Panc1 (cell line): ENCODE measurements at regions of chr17 and their contacts with region 1.

Region 1: GRCh38 chr17:66589892-66590291 is 245.0 kb upstream of the CACNG5 start:
- DNase-seq: no peak
- ATAC-seq: no peak
- H3K4me3 ChIP-seq: no peak overlapping the region
- H3K27ac ChIP-seq: no peak overlapping the region
- H3K4me1 ChIP-seq: no peaks in the 10 kb centered on the region
- H3K27me3 ChIP-seq: no peaks in the 10 kb centered on the region
- CTCF ChIP-seq: no peak

Region 2: DNA sequence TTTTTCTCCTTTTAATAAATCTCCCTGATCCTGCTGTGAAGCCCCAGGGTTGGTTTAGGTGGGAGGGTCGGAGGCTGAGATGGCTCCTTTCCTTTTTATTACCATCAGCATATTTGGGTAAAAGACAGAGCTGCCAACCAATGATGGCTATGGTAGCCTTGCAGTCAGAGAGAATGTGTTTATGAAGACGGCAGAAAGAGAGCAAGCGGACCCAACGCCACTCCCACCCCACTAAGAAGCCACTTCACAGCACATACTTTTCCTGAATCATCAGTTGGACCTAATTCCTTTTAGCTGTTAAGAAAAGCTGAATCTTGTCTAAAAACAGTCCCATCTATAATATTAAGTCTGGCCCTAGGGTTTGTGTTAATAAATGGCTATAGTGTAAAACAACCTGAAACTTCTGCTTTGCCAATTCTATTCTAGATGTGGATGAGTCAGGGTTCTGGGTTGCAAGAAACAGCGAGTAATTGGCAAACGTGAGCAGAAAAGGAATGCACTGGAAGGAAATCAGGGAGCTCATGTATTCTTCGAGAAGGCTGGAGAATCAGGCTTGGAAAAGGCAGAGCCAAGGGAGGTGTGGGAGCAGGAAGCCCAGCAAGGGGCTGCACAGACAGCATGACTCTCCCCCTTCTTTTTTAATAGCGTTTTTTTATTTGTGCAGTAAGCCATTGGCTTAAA is 321.5 kb before region 1 on chr17:
- CTCF ChIA-PET with region 1: no interaction called
- POLR2A ChIA-PET with region 1: no interaction called
- in situ Hi-C with region 1: no loop called
- intact Hi-C with region 1: no loop called
- DNase-seq: no peak
- ATAC-seq: no peak
- H3K4me3 ChIP-seq: no peak overlapping the region
- H3K27ac ChIP-seq: no peak overlapping the region
- H3K4me1 ChIP-seq: peaks cover 12% of the 10 kb centered on the region
- H3K27me3 ChIP-seq: no peaks in the 10 kb centered on the region
- CTCF ChIP-seq: no peak

Region 3: DNA sequence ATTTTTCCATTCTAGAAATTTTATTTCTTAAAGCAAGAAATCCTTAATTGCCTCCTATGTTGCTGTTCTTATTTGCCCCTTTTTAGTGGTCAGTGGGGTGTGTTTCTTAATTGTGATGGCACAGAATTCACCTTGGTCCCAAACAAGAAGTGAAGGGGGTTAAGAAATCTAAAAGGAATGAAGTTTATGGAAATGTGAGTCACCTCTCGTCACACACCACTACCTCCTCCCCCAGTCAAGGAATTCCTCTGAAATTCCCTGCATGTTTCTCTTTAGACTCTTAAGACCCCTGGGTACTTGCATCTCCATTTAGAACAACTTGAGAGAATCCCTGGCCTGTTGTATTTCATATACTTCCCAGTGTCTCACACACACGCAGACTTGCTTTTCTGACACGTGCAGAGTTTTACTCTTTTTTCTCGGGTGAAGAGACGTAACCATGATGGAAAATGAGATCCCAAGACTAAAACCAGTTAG is 40.1 kb before region 1 on chr17:
- CTCF ChIA-PET with region 1: no interaction called
- POLR2A ChIA-PET with region 1: interaction called, 16 read pairs
- in situ Hi-C with region 1: no loop called
- intact Hi-C with region 1: no loop called
- DNase-seq: no peak
- ATAC-seq: peak; percentile 79
- H3K4me3 ChIP-seq: no peak overlapping the region
- H3K27ac ChIP-seq: peak overlapping the region; percentile 75
- H3K4me1 ChIP-seq: peaks cover 40% of the 10 kb centered on the region
- H3K27me3 ChIP-seq: no peaks in the 10 kb centered on the region
- CTCF ChIP-seq: no peak

Region 4: DNA sequence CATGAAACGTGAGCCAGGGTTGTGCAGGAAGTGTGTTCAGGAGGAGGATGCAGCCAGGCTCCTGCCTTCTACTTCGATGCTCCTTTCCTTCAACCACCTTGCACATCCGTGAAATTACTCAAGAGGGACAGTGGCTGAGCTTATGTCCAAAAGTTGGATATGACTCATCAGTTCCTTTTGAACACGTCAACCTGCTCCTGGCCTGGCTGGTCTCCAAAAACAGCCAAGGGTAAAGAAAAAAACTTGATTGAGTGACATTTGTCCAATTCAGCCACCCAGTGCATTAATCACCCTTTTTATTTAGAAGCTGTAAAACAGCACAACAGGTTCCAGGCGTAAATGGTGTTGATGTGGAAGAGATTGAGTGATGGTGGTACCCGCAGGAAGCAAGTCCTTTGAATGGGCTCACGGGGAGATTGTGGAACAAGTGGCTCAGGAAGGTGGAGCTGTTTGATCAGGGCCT is 71.5 kb after region 1 on chr17:
- CTCF ChIA-PET with region 1: no interaction called
- POLR2A ChIA-PET with region 1: no interaction called
- in situ Hi-C with region 1: no loop called
- intact Hi-C with region 1: no loop called
- DNase-seq: peak; percentile 69
- ATAC-seq: peak; percentile 62
- H3K4me3 ChIP-seq: no peak overlapping the region
- H3K27ac ChIP-seq: no peak overlapping the region
- H3K4me1 ChIP-seq: no peaks in the 10 kb centered on the region
- H3K27me3 ChIP-seq: no peaks in the 10 kb centered on the region
- CTCF ChIP-seq: no peak